ENCODE measurements at regions of chr20 and their contacts with region 1.

Region 1: GRCh38 chr20:50189681-50190582 is 698 bp upstream of the CEBPB start:
- H3K4me3 Mint-ChIP-seq: peak overlapping the region; percentile 50
- H3K27ac Mint-ChIP-seq: peak overlapping the region; percentile 88
- H3K4me1 Mint-ChIP-seq: peaks cover 67% of the 10 kb centered on the region
- H3K27me3 Mint-ChIP-seq: peaks cover 11% of the 10 kb centered on the region

Region 2: DNA sequence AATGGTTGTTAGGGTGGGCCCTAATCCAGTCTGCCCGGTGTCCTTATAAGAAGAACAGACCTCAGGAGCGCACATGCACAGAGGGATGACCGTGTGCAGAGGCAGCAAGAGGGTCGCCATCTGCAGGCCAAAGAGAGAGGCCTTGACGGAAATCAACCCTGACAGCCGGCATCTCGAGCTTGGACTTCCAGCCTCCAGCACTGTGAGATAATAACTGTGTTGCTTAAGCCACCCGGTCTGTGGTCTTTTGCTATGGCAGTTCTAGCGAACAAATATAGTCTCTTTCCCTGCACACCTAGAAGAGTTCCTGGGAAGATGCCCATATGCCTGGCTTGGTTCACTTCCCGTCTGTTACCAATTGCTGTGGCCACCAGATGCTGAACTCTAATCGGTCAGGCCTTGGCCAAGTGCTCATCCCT is 586.7 kb before region 1 on chr20:
- intact Hi-C with region 1: no loop called
- H3K4me3 Mint-ChIP-seq: no peak overlapping the region
- H3K27ac Mint-ChIP-seq: no peak overlapping the region
- H3K4me1 Mint-ChIP-seq: no peaks in the 10 kb centered on the region
- H3K27me3 Mint-ChIP-seq: peaks cover 6% of the 10 kb centered on the region

Region 3: DNA sequence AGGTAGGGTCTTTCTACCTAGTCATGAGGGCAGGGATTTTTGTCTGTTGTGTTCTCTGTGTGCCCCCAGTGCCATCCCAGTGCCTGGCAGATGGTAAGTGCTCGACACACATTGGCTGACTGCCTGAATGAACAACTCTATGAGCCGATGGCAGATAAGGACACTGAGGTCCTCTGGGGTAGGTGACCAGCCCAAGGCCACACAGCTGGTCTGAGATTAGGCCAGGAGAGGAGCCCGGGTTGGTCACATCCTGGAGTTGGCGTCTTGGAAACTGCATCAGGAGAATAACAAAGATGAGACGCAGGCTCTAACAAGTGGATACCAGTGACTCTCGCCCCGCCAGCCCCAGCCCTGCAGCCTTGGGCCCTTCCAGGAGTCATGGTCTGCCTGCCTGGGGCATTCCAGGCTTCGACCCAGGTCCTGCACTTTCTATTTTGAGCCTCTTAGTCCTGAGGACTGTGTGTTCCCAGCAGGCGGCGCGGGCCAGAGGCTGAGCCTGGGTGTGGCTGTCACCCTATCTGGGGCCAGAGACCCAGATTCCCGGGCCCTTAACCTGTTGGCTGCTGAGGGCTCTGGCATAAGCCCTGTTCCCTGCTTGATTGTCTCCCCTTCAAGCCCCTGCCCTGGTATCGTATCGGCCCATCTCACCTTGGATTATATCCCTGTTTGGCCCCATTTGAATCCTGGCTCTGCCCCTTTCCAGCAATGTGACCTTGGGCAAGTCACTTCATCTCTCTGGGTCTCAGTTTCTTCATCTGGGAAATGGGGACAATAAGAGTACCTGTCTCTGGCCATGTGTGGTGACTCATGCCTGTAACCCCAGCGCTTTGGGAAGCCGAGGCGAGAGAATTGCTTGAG is 89.0 kb after region 1 on chr20:
- intact Hi-C with region 1: loop called (anchors 2 kb)
- H3K4me3 Mint-ChIP-seq: no peak overlapping the region
- H3K27ac Mint-ChIP-seq: peak overlapping the region; percentile 77
- H3K4me1 Mint-ChIP-seq: peaks cover 93% of the 10 kb centered on the region
- H3K27me3 Mint-ChIP-seq: peaks cover 1% of the 10 kb centered on the region

Region 4: GRCh38 chr20:50346372-50347283 is 156.7 kb after region 1 on chr20:
- intact Hi-C with region 1: loop called (anchors 2 kb)
- H3K4me3 Mint-ChIP-seq: peak overlapping the region; percentile 10
- H3K27ac Mint-ChIP-seq: peak overlapping the region; percentile 86
- H3K4me1 Mint-ChIP-seq: peaks cover 78% of the 10 kb centered on the region
- H3K27me3 Mint-ChIP-seq: peaks cover 9% of the 10 kb centered on the region

Region 5: GRCh38 chr20:50460460-50461267 is 270.7 kb after region 1 on chr20:
- intact Hi-C with region 1: loop called (anchors 1 kb)
- H3K4me3 Mint-ChIP-seq: no peak overlapping the region
- H3K27ac Mint-ChIP-seq: peak overlapping the region; percentile 50
- H3K4me1 Mint-ChIP-seq: peaks cover 52% of the 10 kb centered on the region
- H3K27me3 Mint-ChIP-seq: no peaks in the 10 kb centered on the region

Region 6: GRCh38 chr20:50575847-50576720 is 386.2 kb after region 1 on chr20:
- intact Hi-C with region 1: loop called (anchors 2 kb)
- H3K4me3 Mint-ChIP-seq: no peak overlapping the region
- H3K27ac Mint-ChIP-seq: no peak overlapping the region
- H3K4me1 Mint-ChIP-seq: peaks cover 13% of the 10 kb centered on the region
- H3K27me3 Mint-ChIP-seq: no peaks in the 10 kb centered on the region